ENCODE measurements at regions of chr3 and their contacts with region 1.

Region 1: DNA sequence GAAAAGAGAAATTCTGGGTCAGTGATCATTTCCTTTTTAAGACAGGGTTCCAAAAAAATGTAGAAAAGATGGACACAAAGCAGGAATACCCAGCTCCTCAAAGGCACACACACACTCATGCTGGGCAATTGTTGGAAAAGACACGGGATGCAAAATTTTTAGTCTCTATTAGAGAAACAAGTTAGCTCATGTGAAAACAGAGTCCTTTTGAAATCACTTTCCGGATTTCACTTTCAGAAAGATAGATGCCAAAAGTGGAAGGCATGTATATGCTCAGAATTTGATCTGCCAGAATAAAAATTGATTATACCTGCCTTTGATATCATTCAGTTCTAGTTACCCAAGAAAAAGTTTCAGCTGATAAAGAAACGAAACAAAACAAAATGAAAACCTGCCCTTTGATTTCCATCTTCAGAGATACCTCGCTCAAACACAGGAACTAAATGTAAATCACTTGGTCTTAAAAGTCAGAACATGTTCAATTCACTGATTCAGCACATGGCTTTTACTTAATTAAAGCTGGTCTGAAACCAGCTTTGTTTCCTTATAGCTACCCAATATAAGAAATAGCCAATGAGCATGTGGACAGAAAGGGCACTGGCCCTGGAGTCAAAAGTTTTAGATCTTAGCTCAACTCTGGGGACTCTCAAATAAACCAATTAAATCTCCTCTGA is 52.8 kb downstream of the PLD1 start:
- DNase-seq: peak; percentile 58
- H3K4me3 ChIP-seq: peak overlapping the region in 1 of 3 experiments; percentile 40
- H3K27ac ChIP-seq: peak overlapping the region; percentile 24
- H3K4me1 ChIP-seq: peaks cover 19% of the 10 kb centered on the region
- H3K27me3 ChIP-seq: no peaks in the 10 kb centered on the region
- CTCF ChIP-seq: no peak
- POLR2A ChIP-seq: no peak

Region 2: DNA sequence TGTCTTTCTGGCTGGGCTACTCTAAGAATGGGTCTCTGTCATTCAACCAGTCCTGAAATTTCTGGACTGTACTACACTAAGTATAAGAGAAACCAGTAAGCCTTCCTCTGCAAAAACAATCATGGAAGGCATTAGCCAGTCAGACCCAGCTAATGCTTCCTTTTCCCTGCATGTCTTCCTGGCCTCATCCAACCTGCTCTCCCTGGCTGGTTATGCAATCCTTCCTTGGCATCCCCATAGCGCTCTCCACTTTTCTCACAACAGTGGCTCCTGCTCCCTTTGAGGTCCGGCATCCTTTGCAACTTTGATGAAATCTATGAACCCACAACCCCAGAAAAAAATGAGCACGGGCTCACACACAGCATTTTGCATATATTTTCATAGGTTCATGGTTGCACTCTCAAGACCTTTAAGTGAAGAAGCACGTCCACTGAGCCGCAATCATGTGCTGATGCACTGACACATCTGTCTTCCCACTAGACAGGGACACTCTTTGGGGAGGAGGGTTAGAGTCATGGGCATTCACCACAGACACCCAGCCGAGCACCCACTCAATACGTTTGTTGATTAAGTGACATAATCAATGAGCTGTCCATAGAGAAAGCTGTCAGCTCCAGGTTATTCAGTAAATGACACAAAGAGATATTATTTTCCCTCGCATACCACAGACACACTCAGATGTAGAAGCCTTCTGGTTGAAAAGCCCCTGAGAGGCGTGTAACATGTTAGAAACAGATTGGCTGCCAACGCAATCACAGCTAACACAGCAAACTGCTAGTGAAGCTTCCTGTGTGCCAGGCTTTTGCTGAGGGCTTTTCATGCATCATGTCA is 14.0 kb before region 1 on chr3:
- CTCF ChIA-PET with region 1: interaction called, 13 read pairs
- POLR2A ChIA-PET with region 1: no interaction called
- dilution Hi-C with region 1: no loop called
- intact Hi-C with region 1: no loop called
- DNase-seq: no peak
- H3K4me3 ChIP-seq: no peak overlapping the region
- H3K27ac ChIP-seq: no peak overlapping the region
- H3K4me1 ChIP-seq: peaks cover 3% of the 10 kb centered on the region
- H3K27me3 ChIP-seq: no peaks in the 10 kb centered on the region
- CTCF ChIP-seq: no peak
- POLR2A ChIP-seq: no peak

Region 3: GRCh38 chr3:171851680-171852058 is 94.2 kb after region 1 on chr3:
- CTCF ChIA-PET with region 1: no interaction called
- POLR2A ChIA-PET with region 1: no interaction called
- dilution Hi-C with region 1: no loop called
- intact Hi-C with region 1: no loop called
- DNase-seq: peak; percentile 98
- H3K4me3 ChIP-seq: no peak overlapping the region
- H3K27ac ChIP-seq: peak overlapping the region; percentile 90
- H3K4me1 ChIP-seq: peaks cover 25% of the 10 kb centered on the region
- H3K27me3 ChIP-seq: no peaks in the 10 kb centered on the region
- CTCF ChIP-seq: no peak
- POLR2A ChIP-seq: peak; percentile 49

Measured in endothelial cell of umbilical vein (primary cell).